ENCODE measurements at regions of chr9 and their contacts with region 1.

Region 1: DNA sequence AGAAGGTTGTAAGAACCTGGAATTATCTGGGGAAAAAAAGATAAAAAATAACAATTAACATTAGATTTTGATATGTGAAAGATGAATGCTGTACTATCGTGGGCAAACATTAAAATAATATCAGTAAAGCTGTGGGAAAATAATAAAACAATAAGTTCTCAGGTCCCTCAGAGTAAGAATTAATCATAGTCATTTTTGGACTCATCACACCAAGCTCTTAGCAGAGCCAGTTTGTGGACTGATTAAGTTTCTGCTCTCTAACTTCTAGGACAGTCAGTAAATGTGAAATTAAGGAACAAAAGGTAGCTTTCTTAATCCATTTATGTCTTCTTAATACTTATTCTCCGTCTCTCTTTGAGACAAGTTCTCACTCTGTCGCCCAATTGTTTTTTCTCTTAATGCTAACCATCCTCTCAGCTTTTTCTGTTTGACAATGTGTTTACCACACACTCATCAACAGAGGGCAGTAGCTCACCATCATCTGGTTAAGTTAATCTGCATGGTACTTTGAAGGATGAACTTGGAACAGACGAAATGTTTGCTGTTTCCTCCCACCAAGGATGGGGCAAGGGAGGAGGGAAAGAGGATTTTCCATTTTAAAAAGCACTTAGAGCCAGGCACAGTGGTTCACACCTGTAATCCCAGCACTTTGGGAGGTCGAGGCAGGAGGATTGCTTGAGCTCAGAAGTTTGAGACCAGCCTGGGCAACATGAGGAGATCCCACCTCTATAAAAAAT is 5.3 kb upstream of the ACO1 start:
- DNase-seq: no peak
- ATAC-seq: peak; percentile 80
- H3K4me3 Mint-ChIP-seq: no peak overlapping the region
- H3K27ac Mint-ChIP-seq: no peak overlapping the region
- H3K4me1 Mint-ChIP-seq: peaks cover 15% of the 10 kb centered on the region
- H3K27me3 Mint-ChIP-seq: peaks cover 27% of the 10 kb centered on the region
- CTCF ChIP-seq: no peak

Region 2: GRCh38 chr9:32344551-32345182 is 34.5 kb before region 1 on chr9:
- CTCF ChIA-PET with region 1: no interaction called
- POLR2A ChIA-PET with region 1: no interaction called
- intact Hi-C with region 1: no loop called
- DNase-seq: no peak
- ATAC-seq: no peak
- H3K4me3 Mint-ChIP-seq: no peak overlapping the region
- H3K27ac Mint-ChIP-seq: no peak overlapping the region
- H3K4me1 Mint-ChIP-seq: no peaks in the 10 kb centered on the region
- H3K27me3 Mint-ChIP-seq: no peaks in the 10 kb centered on the region
- CTCF ChIP-seq: no peak

Region 3: GRCh38 chr9:32526041-32526706 is 147.0 kb after region 1 on chr9 and contains the start of gene RIGI:
- CTCF ChIA-PET with region 1: interaction called, 34 read pairs
- POLR2A ChIA-PET with region 1: no interaction called
- intact Hi-C with region 1: loop called (anchors 1 kb)
- DNase-seq: peak; percentile 59
- ATAC-seq: peak; percentile 69
- H3K4me3 Mint-ChIP-seq: peak within 1 kb of the TSS; percentile 98
- H3K27ac Mint-ChIP-seq: peak within 1 kb of the TSS; percentile 94
- H3K4me1 Mint-ChIP-seq: peaks cover 55% of the 10 kb centered on the region
- H3K27me3 Mint-ChIP-seq: no peaks in the 10 kb centered on the region
- CTCF ChIP-seq: no peak
- total RNA-seq, gene RIGI: 11.3 and 12.3 TPM in 2 replicates

Region 4: DNA sequence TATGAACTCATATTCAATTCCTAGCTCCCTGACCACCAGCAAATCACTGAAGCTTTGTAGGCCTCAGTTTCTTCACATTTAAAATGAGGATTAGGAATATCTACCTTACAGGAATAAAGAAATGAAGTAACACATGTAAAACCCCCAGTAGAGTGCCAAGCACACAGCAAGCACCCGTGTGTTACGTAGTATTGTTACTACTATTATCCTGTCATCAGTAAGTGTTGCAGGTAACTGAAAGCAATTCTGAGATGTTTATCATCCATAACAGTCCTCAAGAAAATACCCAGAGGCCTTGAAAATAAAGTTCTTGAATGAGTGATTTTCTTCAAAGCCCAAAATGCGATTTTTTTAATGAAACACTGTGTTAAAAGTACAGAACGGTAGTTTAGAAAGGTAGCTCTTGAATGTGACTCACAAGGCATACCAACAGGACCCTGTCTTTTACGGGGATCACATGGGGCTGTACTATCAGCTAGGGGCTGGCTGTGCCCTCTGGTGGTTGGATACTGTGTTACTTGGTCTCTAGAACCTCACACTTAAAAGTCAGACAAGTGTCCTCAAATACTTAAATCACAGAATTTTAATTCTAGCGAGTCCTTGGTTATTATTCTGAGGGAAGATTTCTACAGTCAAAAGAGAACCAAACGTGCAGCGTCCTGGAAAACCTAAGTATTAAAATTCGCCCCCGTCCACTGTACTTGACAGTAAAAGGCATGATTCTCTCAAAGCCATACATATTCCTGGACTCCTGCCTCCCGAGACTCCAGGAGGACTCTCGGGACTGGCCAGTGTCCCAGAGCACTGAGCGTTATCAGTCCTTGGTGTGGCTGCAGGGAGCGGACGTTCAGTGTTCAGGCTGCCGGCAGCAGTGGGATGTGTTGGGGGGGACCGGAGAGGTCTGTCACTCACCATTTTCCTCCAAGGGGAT is 193.1 kb after region 1 on chr9:
- CTCF ChIA-PET with region 1: interaction called, 440 read pairs
- POLR2A ChIA-PET with region 1: interaction called, 8 read pairs
- intact Hi-C with region 1: loop called (anchors 1 kb)
- DNase-seq: no peak
- ATAC-seq: peak; percentile 80
- H3K4me3 Mint-ChIP-seq: peak overlapping the region; percentile 99
- H3K27ac Mint-ChIP-seq: peak overlapping the region; percentile 94
- H3K4me1 Mint-ChIP-seq: peaks cover 21% of the 10 kb centered on the region
- H3K27me3 Mint-ChIP-seq: no peaks in the 10 kb centered on the region
- CTCF ChIP-seq: peak; percentile 30

Region 5: DNA sequence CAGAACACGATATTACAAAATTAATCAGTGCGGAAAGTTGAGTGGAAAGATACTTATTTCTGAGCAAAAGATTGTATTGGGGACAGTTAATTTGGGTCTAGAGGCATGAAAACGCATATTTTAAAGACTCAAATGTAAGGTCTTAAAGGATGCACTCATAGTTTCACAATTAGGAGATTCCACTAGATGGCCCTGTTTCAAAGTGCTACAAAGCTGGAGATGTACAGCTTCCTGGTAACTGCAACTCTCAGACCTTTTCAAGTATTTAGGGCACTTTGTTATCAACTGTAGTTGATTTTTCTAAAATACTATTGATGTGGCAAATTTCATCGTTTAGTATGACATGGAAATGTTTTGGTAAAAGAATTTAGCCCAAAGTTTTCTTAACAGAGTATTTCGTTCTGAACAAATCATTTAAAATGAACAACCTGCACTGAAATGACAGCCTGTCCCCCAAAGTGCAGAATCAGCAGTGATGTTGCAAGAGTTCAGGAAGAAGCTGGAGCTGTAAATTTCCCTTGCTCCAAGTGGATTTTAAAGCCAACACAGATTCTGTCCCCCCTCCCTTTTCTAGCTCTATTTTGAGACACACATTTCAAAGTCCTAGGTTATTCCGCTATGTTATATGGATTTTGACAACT is 210.0 kb after region 1 on chr9:
- CTCF ChIA-PET with region 1: interaction called, 27 read pairs
- POLR2A ChIA-PET with region 1: no interaction called
- intact Hi-C with region 1: no loop called
- DNase-seq: no peak
- ATAC-seq: no peak
- H3K4me3 Mint-ChIP-seq: no peak overlapping the region
- H3K27ac Mint-ChIP-seq: no peak overlapping the region
- H3K4me1 Mint-ChIP-seq: no peaks in the 10 kb centered on the region
- H3K27me3 Mint-ChIP-seq: peaks cover 23% of the 10 kb centered on the region
- CTCF ChIP-seq: no peak

Region 6: GRCh38 chr9:32968101-32969011 is 589.2 kb after region 1 on chr9:
- CTCF ChIA-PET with region 1: interaction called, 71 read pairs
- POLR2A ChIA-PET with region 1: no interaction called
- intact Hi-C with region 1: loop called (anchors 1 kb)
- DNase-seq: no peak
- ATAC-seq: no peak
- H3K4me3 Mint-ChIP-seq: no peak overlapping the region
- H3K27ac Mint-ChIP-seq: no peak overlapping the region
- H3K4me1 Mint-ChIP-seq: peaks cover 2% of the 10 kb centered on the region
- H3K27me3 Mint-ChIP-seq: no peaks in the 10 kb centered on the region
- CTCF ChIP-seq: no peak

Region 7: GRCh38 chr9:33044677-33045282 is 665.6 kb after region 1 on chr9:
- CTCF ChIA-PET with region 1: no interaction called
- POLR2A ChIA-PET with region 1: no interaction called
- intact Hi-C with region 1: no loop called
- DNase-seq: no peak
- ATAC-seq: no peak
- H3K4me3 Mint-ChIP-seq: peak overlapping the region; percentile 83
- H3K27ac Mint-ChIP-seq: peak overlapping the region; percentile 50
- H3K4me1 Mint-ChIP-seq: peaks cover 18% of the 10 kb centered on the region
- H3K27me3 Mint-ChIP-seq: no peaks in the 10 kb centered on the region
- CTCF ChIP-seq: no peak

Measured in activated B cell treated with CpG ODN at 0.5 μM for 24 hours (primary cell).